ENCODE measurements at regions of chr13 and their contacts with region 1.

Region 1: GRCh38 chr13:45119991-45120864 is at the start of gene GTF2F2:
- DNase-seq: peak; percentile 76
- ATAC-seq: peak; percentile 89
- H3K4me3 ChIP-seq: peak within 1 kb of the TSS; percentile 66 to 78 (median 77)
- H3K27ac ChIP-seq: peak within 1 kb of the TSS; percentile 78
- H3K4me1 ChIP-seq: peaks cover 23% of the 10 kb centered on the region
- H3K27me3 ChIP-seq: no peaks in the 10 kb centered on the region; a peak in 1 of 5 replicates
- CTCF ChIP-seq: peak; percentile 49
- EP300 ChIP-seq: 0 out of 4 replicates have a peak, but pooled peaks of 1 of the 2 experiments have one; percentile 6
- POLR2A ChIP-seq: peak; percentile 71 to 86
- RAD21 ChIP-seq: peak; percentile 43; the same call in 1 of the 2 replicates
- total RNA-seq, gene GTF2F2: 32.8 and 48.3 TPM in 2 replicates

Region 2: GRCh38 chr13:45178349-45179162 is 58.3 kb after region 1 on chr13:
- CTCF ChIA-PET with region 1: no interaction called
- POLR2A ChIA-PET with region 1: no interaction called
- in situ Hi-C with region 1: no loop called
- intact Hi-C with region 1: loop called (anchors 2 kb)
- DNase-seq: peak; percentile 53
- ATAC-seq: peak; percentile 75
- H3K4me3 ChIP-seq: no peak overlapping the region
- H3K27ac ChIP-seq: peak overlapping the region; percentile 59
- H3K4me1 ChIP-seq: peaks cover 31% of the 10 kb centered on the region
- H3K27me3 ChIP-seq: no peaks in the 10 kb centered on the region
- CTCF ChIP-seq: no peak
- EP300 ChIP-seq: no peak
- POLR2A ChIP-seq: no peak
- RAD21 ChIP-seq: no peak

Region 3: DNA sequence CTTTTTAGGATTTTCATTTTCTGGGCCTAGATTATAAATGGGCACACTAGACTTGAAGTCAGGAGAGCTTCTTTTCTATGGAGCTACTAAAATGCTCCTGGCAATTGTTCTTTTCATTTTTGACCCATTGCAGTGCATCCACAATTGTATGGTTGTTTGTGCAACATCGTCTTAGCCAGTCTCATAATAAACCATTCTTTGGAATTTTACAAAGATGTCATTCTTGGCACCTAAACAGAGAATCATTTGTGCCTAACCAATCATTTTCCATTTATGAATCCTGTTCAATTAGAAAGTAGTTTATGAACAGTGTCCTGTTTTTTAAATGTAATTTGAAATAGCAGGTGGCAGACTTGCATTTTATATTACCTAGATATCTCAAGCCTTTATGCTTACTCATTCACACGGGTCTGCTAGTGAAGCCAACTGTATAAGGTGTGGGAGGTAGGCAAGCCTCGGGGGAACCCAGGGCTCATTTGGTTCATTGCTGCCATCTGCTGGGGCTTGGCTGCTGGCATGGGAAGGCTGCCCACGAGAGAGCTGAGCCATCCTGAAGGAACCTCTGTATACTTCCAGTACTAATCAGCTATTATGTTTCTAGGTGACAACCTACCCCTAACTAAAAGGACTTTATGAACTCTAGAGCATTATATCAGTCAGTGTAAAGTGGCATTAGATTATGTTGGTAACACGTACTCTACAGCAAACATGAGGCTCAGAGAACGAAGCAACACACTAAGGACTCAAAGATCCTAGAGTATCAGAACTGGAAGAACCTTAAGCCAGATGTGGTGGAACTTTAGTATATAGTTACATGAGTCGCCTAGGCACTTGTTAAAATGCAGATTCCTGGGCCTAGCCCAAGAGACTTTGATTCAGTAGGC is 160.8 kb after region 1 on chr13:
- CTCF ChIA-PET with region 1: no interaction called
- POLR2A ChIA-PET with region 1: no interaction called
- in situ Hi-C with region 1: no loop called
- intact Hi-C with region 1: loop called (anchors 1 kb)
- DNase-seq: peak; percentile 47
- ATAC-seq: peak; percentile 99
- H3K4me3 ChIP-seq: no peak overlapping the region
- H3K27ac ChIP-seq: no peak overlapping the region
- H3K4me1 ChIP-seq: no peaks in the 10 kb centered on the region
- H3K27me3 ChIP-seq: no peaks in the 10 kb centered on the region
- CTCF ChIP-seq: peak; percentile 85
- EP300 ChIP-seq: no peak
- POLR2A ChIP-seq: no peak
- RAD21 ChIP-seq: peak; percentile 85